ENCODE measurements at regions of chr2 and their contacts with region 1.

Region 1: GRCh38 chr2:180980106-180980942 is at the start of gene UBE2E3:
- DNase-seq: peak; percentile 79
- ATAC-seq: peak; percentile 80
- H3K4me3 Mint-ChIP-seq: peak within 1 kb of the TSS; percentile 93
- H3K27ac Mint-ChIP-seq: peak within 1 kb of the TSS; percentile 95
- H3K4me1 Mint-ChIP-seq: peaks cover 37% of the 10 kb centered on the region
- H3K27me3 Mint-ChIP-seq: no peaks in the 10 kb centered on the region
- CTCF ChIP-seq: no peak
- total RNA-seq, gene UBE2E3: 33.1 and 33.6 TPM in 2 replicates

Region 2: DNA sequence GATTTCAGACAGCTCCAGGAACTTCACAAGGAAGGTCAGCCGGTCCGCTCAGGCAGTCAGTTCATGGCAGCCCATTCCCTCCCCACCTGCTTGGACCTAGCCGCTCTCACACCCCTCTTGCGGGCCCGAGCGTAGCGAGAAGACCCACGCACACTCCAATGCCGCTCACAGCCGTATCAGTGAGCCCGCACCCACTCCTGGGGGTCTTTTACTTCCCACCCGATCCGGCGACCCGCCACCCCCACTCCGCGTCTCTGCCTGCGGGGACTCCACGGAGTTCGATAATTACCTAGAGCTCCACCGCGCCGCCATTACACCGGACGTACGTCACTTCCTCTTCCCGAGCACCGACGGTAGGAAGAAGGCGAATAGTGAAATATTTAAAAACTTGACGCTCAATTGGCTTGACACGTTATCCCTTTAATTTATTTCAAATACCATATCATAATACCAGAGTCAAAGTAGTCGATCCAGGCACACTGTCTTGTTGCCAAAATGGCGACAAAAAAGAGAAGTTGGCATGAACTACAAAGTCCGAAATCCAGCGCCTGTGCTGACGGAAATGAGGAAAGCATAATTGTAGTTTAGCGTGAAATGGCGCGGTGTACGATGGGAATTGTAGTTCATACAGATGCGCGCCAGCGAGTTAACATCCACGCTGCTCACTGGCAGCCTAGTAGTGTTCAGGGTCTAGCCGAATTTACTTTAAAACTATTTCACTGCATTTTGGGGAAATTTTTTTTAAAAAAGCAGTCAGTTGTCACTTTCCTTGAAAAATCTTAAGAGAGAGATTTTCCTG is 973.3 kb before region 1 on chr2 and contains the start of gene CWC22:
- CTCF ChIA-PET with region 1: no interaction called
- POLR2A ChIA-PET with region 1: interaction called, 4 read pairs
- intact Hi-C with region 1: loop called (anchors 1 kb)
- DNase-seq: peak; percentile 75
- ATAC-seq: peak; percentile 93
- H3K4me3 Mint-ChIP-seq: peak within 1 kb of the TSS; percentile 93
- H3K27ac Mint-ChIP-seq: peak within 1 kb of the TSS; percentile 98
- H3K4me1 Mint-ChIP-seq: peaks cover 43% of the 10 kb centered on the region
- H3K27me3 Mint-ChIP-seq: no peaks in the 10 kb centered on the region
- CTCF ChIP-seq: no peak
- total RNA-seq, gene CWC22: 27.5 and 28.9 TPM in 2 replicates

Region 3: GRCh38 chr2:180240774-180241173 is 739.5 kb before region 1 on chr2:
- CTCF ChIA-PET with region 1: no interaction called
- POLR2A ChIA-PET with region 1: no interaction called
- intact Hi-C with region 1: loop called (anchors 2 kb)
- DNase-seq: no peak
- ATAC-seq: no peak
- H3K4me3 Mint-ChIP-seq: no peak overlapping the region
- H3K27ac Mint-ChIP-seq: no peak overlapping the region
- H3K4me1 Mint-ChIP-seq: no peaks in the 10 kb centered on the region
- H3K27me3 Mint-ChIP-seq: no peaks in the 10 kb centered on the region
- CTCF ChIP-seq: no peak

Region 4: DNA sequence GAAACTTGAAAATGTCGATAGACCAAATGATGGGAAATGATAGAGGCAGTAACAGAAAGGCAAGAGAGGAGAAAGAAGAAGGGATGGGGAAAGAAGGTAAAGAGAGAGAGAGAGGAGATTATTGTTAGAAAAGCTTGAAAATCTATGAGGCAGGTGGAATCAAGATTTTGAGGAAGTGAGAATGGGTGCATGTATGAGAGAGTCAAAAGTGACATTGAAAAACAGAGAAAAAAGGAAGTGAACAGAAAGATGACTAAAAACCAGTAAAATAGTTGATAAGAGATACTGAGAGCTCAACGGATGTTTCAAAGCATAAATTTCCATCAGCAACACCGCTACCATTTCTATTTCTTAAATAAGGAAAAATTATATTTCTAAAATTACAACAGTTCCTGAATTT is 645.8 kb before region 1 on chr2:
- CTCF ChIA-PET with region 1: no interaction called
- POLR2A ChIA-PET with region 1: no interaction called
- intact Hi-C with region 1: loop called (anchors 1 kb)
- DNase-seq: no peak
- ATAC-seq: peak; percentile 92
- H3K4me3 Mint-ChIP-seq: peak overlapping the region; percentile 4
- H3K27ac Mint-ChIP-seq: peak overlapping the region; percentile 64
- H3K4me1 Mint-ChIP-seq: peaks cover 24% of the 10 kb centered on the region
- H3K27me3 Mint-ChIP-seq: no peaks in the 10 kb centered on the region
- CTCF ChIP-seq: no peak

Region 5: DNA sequence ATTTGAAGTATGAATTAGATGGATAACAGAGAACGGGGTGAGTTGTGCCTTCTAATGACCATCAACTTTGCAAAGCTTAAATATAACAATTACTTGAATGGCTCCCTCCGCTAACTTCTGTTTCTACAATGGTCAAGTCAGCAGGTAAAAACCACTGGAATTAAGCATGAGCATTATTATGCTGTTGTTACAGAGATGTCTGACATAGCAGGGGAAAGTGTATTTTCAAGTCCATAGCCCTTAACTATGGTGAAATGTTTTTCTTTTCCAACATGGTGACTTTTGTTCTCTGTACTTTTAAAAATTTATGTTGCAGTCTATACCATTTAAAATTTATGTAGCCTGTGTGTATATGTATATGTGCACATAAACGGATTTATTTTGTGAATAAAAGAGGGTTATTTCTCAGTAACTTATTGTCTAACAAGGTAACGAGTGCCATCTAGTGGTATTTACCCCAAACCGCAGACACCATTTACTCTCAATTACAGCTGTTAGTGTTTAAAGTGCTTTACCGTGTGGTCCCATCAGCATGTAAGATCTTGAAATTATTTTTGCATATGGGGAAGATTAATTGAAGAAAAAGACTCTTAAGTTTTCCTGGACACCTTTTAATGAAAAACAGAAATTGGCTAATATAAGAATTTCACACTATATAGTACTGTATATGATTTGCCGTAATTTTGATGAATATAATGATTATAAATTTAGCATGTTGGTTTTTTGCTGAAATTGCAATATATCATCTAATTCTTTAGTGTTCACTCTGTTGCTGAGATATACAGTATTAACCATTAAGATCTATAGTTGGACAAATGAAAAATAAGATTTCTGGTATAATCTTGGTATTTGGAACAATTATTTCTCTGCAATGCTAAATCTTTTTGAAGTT is 78.3 kb after region 1 on chr2:
- CTCF ChIA-PET with region 1: interaction called, 7 read pairs
- POLR2A ChIA-PET with region 1: no interaction called
- intact Hi-C with region 1: loop called (anchors 1 kb)
- DNase-seq: no peak
- ATAC-seq: peak; percentile 56
- H3K4me3 Mint-ChIP-seq: no peak overlapping the region
- H3K27ac Mint-ChIP-seq: no peak overlapping the region
- H3K4me1 Mint-ChIP-seq: peaks cover 3% of the 10 kb centered on the region
- H3K27me3 Mint-ChIP-seq: no peaks in the 10 kb centered on the region
- CTCF ChIP-seq: peak; percentile 90

Region 6: GRCh38 chr2:181419129-181419855 is 439.0 kb after region 1 on chr2:
- CTCF ChIA-PET with region 1: no interaction called
- POLR2A ChIA-PET with region 1: no interaction called
- intact Hi-C with region 1: loop called (anchors 5 kb)
- DNase-seq: no peak
- ATAC-seq: peak; percentile 82
- H3K4me3 Mint-ChIP-seq: peak overlapping the region; percentile 20
- H3K27ac Mint-ChIP-seq: peak overlapping the region; percentile 87
- H3K4me1 Mint-ChIP-seq: peaks cover 75% of the 10 kb centered on the region
- H3K27me3 Mint-ChIP-seq: no peaks in the 10 kb centered on the region
- CTCF ChIP-seq: no peak

Measured in activated B cell treated with CpG ODN at 0.5 μM for 24 hours (primary cell).